ENCODE measurements at regions of chr6 and their contacts with region 1.

Region 1: DNA sequence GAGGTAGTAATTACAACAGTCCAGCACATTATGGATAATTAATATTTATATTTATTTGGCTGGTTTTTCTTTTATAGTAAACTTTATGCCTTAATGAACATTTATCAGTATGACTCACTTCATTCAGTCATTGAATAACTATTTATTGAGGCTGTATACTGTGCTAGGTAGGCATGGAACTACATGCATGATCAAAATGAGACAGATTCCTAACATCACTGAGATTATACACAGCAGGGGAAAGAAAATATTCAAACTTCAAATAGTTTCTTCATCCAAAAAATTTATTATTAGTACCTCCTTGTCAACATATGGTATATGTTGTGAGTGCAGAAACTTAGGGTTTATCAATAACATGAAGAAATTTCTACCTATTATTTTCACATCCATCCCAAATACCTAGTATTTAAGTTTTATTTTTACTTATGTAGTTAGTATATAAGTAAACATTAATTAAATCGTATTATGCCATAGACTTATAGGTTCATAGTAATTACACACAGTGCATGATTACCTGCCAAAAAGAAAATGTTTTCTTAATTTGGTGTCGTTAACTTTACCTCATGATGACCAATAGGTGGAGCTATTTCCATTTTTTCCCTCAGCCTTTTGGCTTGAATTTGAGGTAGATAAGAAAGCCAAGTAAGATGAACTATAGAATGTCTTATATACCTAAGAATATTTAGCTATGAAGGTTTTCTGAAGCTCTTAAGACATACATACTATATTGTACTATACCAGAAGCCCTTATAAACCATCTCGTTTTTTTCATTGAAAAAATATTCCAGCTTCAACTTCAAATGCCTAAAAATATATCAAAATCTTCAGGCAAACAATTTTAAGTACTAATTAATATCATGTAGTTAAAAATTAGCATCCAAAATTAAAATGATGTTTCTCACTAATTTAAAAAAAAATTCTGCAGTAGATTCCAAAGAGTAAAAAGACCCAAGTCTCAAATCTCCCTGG is 12.5 kb upstream of the TMEM30A start:
- DNase-seq: no peak
- ATAC-seq: peak in 1 of 2 donors; percentile 40
- H3K4me3 ChIP-seq: no peak overlapping the region
- H3K27ac ChIP-seq: no peak overlapping the region
- H3K4me1 ChIP-seq: peaks cover 2% of the 10 kb centered on the region
- H3K27me3 ChIP-seq: no peaks in the 10 kb centered on the region

Region 2: GRCh38 chr6:75504465-75505228 is 207.6 kb after region 1 on chr6:
- intact Hi-C with region 1: loop called in 2 of 4 experiments (anchors 10 kb)
- DNase-seq: peak in 2 of 3 donors; percentile 36 to 37
- ATAC-seq: peak; percentile 75 to 87
- H3K4me3 ChIP-seq: no peak overlapping the region
- H3K27ac ChIP-seq: no peak overlapping the region
- H3K4me1 ChIP-seq: no peaks in the 10 kb centered on the region
- H3K27me3 ChIP-seq: no peaks in the 10 kb centered on the region

Region 3: DNA sequence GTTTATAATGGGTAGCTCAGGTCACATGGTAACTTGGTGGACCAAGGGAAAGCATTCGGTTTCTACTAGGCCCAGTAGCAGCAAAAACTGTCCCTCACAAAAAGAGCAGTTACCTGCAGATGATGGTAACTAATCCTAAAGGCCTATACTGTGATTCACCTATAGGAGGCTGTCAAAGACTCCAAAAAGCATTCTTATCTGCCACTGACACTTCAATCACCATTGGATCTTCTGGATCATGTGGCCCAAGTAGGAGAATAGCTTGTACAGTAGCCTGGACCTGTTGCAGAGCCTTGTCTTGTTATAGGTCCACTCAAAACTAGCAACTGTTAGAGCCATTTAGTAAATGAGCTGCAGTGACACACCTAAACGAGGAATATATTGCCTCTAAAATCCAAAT is 219.7 kb after region 1 on chr6:
- intact Hi-C with region 1: loop called in 1 of 4 experiments (anchors 10 kb)
- DNase-seq: no peak
- ATAC-seq: no peak
- H3K4me3 ChIP-seq: no peak overlapping the region
- H3K27ac ChIP-seq: no peak overlapping the region
- H3K4me1 ChIP-seq: no peaks in the 10 kb centered on the region
- H3K27me3 ChIP-seq: no peaks in the 10 kb centered on the region

Region 4: GRCh38 chr6:75842191-75842590 is 545.1 kb after region 1 on chr6:
- intact Hi-C with region 1: no loop called
- DNase-seq: no peak
- ATAC-seq: no peak
- H3K4me3 ChIP-seq: no peak overlapping the region
- H3K27ac ChIP-seq: no peak overlapping the region
- H3K4me1 ChIP-seq: peaks cover 1% of the 10 kb centered on the region
- H3K27me3 ChIP-seq: no peaks in the 10 kb centered on the region

Measured in right cardiac atrium (tissue), 5 donors.